Activated naive CD4-positive, alpha-beta T cell treated with anti-CD3 and anti-CD28 coated beads for 36 hours (primary cell): ENCODE measurements at regions of chr16 and their contacts with region 1.

Region 1: GRCh38 chr16:31458844-31459721 is at the start of gene ARMC5:
- DNase-seq: peak; percentile 99
- H3K4me3 Mint-ChIP-seq: peak within 1 kb of the TSS; percentile 87
- H3K27ac Mint-ChIP-seq: peak within 1 kb of the TSS; percentile 94
- H3K4me1 Mint-ChIP-seq: peaks cover 41% of the 10 kb centered on the region
- H3K27me3 Mint-ChIP-seq: no peaks in the 10 kb centered on the region
- total RNA-seq, gene ARMC5: 6.3 to 6.7 TPM

Region 2: GRCh38 chr16:30997000-30997886 is 461.8 kb before region 1 on chr16:
- CTCF ChIA-PET with region 1: no interaction called
- intact Hi-C with region 1: loop called (anchors 5 kb)
- DNase-seq: peak; percentile 86
- H3K4me3 Mint-ChIP-seq: peak overlapping the region; percentile 73
- H3K27ac Mint-ChIP-seq: no peak overlapping the region
- H3K4me1 Mint-ChIP-seq: peaks cover 11% of the 10 kb centered on the region
- H3K27me3 Mint-ChIP-seq: no peaks in the 10 kb centered on the region

Region 3: GRCh38 chr16:31142109-31143010 is 316.7 kb before region 1 on chr16:
- CTCF ChIA-PET with region 1: no interaction called
- intact Hi-C with region 1: loop called (anchors 1 kb)
- DNase-seq: peak; percentile 99
- H3K4me3 Mint-ChIP-seq: peak overlapping the region; percentile 64
- H3K27ac Mint-ChIP-seq: peak overlapping the region; percentile 84
- H3K4me1 Mint-ChIP-seq: peaks cover 12% of the 10 kb centered on the region
- H3K27me3 Mint-ChIP-seq: no peaks in the 10 kb centered on the region

Region 4: GRCh38 chr16:31476303-31477219 is 17.5 kb after region 1 on chr16:
- CTCF ChIA-PET with region 1: interaction called, 6 read pairs
- intact Hi-C with region 1: loop called (anchors 1 kb)
- DNase-seq: peak; percentile 93
- H3K4me3 Mint-ChIP-seq: peak overlapping the region; percentile 78
- H3K27ac Mint-ChIP-seq: no peak overlapping the region
- H3K4me1 Mint-ChIP-seq: peaks cover 16% of the 10 kb centered on the region
- H3K27me3 Mint-ChIP-seq: peaks cover 18% of the 10 kb centered on the region

Region 5: DNA sequence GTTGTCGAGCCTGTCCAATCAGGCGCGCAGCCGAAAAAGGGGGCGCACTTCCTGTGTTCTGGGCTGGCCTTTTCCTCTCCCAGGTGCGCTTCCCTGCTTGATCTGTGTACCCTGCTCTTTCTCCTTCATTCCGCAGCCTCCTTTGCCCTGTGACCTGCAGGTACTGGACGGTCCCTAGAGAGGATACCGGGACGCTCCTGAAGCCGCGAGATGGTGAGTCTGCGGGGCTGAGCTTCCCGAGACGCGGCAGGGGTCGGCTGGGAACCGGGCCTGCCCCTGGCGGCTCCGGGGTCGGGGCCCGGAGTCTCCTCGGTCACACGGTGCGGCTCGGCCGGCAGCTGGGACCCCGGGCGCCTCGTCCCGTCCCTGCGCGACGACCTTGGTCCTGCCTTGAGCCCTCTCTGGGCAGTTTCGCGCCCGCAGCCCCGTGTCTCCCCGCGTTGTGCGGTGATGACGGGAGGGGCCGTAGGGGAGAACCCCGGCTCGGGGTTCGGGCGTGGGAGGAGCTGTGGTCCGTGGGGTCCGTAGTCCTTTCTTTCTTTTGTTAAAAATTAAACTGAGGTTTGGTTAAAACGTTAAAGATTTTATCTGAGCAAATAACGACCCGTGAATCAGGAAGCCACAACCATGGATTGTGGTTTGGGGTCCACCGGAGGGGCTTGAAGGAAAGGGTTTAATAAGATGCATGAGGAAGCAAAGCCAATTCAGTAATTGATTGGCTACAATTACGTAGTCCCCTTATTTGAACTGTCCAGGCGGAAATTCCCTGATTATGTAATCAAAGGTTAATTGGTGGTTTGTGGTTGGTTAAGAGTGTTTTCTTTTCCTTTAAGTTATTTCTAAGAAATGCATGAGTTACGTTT is 241.7 kb after region 1 on chr16:
- CTCF ChIA-PET with region 1: interaction called, 11 read pairs
- intact Hi-C with region 1: loop called (anchors 1 kb)
- DNase-seq: peak; percentile 93
- H3K4me3 Mint-ChIP-seq: peak overlapping the region; percentile 85
- H3K27ac Mint-ChIP-seq: peak overlapping the region; percentile 95
- H3K4me1 Mint-ChIP-seq: peaks cover 27% of the 10 kb centered on the region
- H3K27me3 Mint-ChIP-seq: no peaks in the 10 kb centered on the region